Right lobe of liver (tissue), 6 donors: ENCODE measurements at regions of chr1 and their contacts with region 1.

Region 1: GRCh38 chr1:153749408-153750005 is 21.7 kb downstream of the INTS3 start:
- DNase-seq: peak; percentile 83 to 88 (median 87)
- ATAC-seq: peak; percentile 98 to 99 (median 98)
- H3K4me3 ChIP-seq: no peak overlapping the region
- H3K27ac ChIP-seq: peak overlapping the region in 1 of 3 donors; percentile 21
- H3K4me1 ChIP-seq: peaks cover 0 to 12% (median 0%) of the 10 kb centered on the region in 4 donors
- H3K27me3 ChIP-seq: no peaks in the 10 kb centered on the region
- CTCF ChIP-seq: peak; percentile 95 to 99 (median 98)
- POLR2A ChIP-seq: no peak

Region 2: GRCh38 chr1:153677718-153678505 is 71.6 kb before region 1 on chr1:
- intact Hi-C with region 1: loop called (anchors 5 to 10 kb)
- DNase-seq: peak; percentile 46 to 54 (median 53)
- ATAC-seq: peak; percentile 77 to 82 (median 80)
- H3K4me3 ChIP-seq: peak overlapping the region; percentile 44 to 51 (median 50)
- H3K27ac ChIP-seq: peak overlapping the region in 1 of 3 donors; percentile 12
- H3K4me1 ChIP-seq: peaks cover 0 to 23% (median 3%) of the 10 kb centered on the region in 4 donors
- H3K27me3 ChIP-seq: peaks cover 0 to 7% of the 10 kb centered on the region in 2 donors
- CTCF ChIP-seq: peak; percentile 83 to 91 (median 88)
- POLR2A ChIP-seq: no peak

Region 3: DNA sequence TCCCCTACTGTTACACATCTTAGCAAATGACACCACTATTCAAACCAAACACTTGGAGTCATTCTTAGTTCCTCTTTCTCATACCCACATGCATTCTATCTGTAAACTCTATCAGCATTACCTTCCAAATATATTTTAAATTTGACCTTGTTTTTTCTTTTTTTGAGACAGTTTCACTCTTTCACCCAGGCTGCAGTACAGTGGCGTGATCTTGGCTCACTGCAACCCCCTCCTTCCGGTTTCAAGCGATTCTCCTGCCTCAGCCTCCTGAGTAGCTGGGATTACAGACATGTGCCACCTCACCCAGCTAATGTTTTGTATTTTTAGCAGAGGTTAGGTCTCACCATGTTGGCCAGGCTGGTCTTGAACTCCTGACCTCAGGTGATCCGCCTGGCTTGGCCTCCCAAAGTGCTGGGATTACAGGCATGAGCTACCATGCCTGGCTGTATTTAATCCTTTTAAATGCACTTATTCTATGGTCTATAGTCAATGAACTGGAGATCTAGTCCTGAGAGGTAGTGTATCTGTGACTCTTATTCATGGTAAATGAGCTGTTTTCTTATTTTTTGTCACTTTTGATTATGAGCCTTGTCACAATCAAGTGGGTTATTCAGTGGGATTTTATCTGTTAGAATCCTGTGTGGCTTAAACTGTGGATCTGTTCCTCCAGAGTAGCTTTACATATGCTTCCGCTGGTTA is 100.1 kb after region 1 on chr1:
- intact Hi-C with region 1: no loop called
- DNase-seq: peak in 1 of 3 donors; percentile 14
- ATAC-seq: no peak
- H3K4me3 ChIP-seq: no peak overlapping the region
- H3K27ac ChIP-seq: no peak overlapping the region
- H3K4me1 ChIP-seq: peaks cover 0 to 12% (median 0%) of the 10 kb centered on the region in 4 donors
- H3K27me3 ChIP-seq: no peaks in the 10 kb centered on the region
- CTCF ChIP-seq: no peak
- POLR2A ChIP-seq: no peak

Region 4: DNA sequence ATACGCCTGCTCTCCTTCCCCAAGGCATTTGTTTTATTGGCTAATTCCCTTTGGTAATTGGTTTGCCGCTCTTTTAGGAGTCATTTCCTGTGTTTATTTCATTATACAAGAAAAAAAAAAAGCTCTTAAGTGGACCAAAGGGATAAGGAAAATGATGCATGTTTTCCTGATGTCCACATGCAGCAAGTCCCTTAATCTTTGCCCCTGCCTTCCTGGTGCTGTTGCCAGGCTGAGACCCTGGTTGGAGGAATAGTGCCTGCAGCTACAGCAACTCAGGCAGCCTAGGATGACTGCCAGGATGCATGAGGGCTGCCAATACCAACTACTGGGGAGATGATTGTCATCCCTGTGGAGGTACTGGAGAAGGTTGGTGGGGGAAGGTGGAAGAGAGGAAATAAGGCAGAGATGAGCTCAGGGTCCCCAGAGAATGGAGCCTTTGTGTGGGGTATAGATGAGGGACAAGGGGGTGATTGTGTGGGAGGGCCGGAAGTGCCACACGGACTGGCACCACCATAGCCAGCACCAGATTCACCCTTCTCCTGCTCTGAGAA is 179.4 kb after region 1 on chr1:
- intact Hi-C with region 1: no loop called
- DNase-seq: peak in 1 of 3 donors; percentile 18
- ATAC-seq: peak; percentile 9 to 49 (median 24)
- H3K4me3 ChIP-seq: no peak overlapping the region
- H3K27ac ChIP-seq: no peak overlapping the region
- H3K4me1 ChIP-seq: peaks cover 0 to 4% (median 0%) of the 10 kb centered on the region in 4 donors
- H3K27me3 ChIP-seq: no peaks in the 10 kb centered on the region
- CTCF ChIP-seq: no peak
- POLR2A ChIP-seq: no peak